CD8-positive, alpha-beta memory T cell (primary cell): ENCODE measurements at regions of chr3 and their contacts with region 1.

Region 1: DNA sequence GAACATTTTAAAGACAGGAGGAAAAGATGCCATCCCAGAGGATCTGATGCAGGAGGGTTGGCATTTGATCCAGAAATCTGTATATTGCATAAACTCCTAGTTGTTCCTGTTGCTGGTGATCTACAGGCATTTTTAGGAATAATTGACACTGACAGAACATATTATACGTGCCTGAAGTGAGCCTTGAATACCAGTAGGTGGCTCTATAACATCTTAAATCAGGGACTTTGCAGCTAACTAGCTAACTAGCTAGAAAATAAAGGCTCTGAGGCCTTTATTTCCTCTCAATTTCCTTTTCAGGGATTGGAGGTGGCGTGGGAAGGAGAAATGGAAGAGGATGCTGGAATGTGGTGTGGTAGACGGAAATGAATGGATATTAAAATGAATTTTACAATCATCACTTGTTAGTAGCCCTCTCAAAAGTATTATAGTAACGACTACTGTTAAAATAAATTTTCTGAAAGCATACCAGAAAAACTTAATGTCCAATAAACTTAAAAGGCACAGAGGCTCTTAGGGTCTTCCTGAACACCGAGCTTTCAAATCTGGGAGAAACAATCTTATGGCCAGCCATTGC is 73.9 kb upstream of the ZBED2 start:
- DNase-seq: peak in 2 of 5 donors; percentile 53 to 59
- H3K4me3 ChIP-seq: no peak overlapping the region
- H3K4me3 Mint-ChIP-seq: peak overlapping the region in 4 of 7 donors; percentile 3 to 46 (median 13)
- H3K27ac ChIP-seq: no peak overlapping the region
- H3K27ac Mint-ChIP-seq: peak overlapping the region; percentile 46 to 91 (median 72)
- H3K4me1 ChIP-seq: peaks cover 62% of the 10 kb centered on the region
- H3K4me1 Mint-ChIP-seq: peaks cover 65 to 88% (median 82%) of the 10 kb centered on the region in 3 donors
- H3K27me3 ChIP-seq: no peaks in the 10 kb centered on the region
- H3K27me3 Mint-ChIP-seq: no peaks in the 10 kb centered on the region

Region 2: GRCh38 chr3:111627092-111627491 is 41.9 kb before region 1 on chr3:
- CTCF ChIA-PET with region 1: no interaction called
- POLR2A ChIA-PET with region 1: no interaction called
- DNase-seq: no peak
- H3K4me3 ChIP-seq: no peak overlapping the region
- H3K4me3 Mint-ChIP-seq: no peak overlapping the region
- H3K27ac ChIP-seq: no peak overlapping the region
- H3K27ac Mint-ChIP-seq: no peak overlapping the region
- H3K4me1 ChIP-seq: no peaks in the 10 kb centered on the region
- H3K4me1 Mint-ChIP-seq: peaks cover 12 to 26% (median 16%) of the 10 kb centered on the region in 3 donors
- H3K27me3 ChIP-seq: no peaks in the 10 kb centered on the region
- H3K27me3 Mint-ChIP-seq: peaks cover 0 to 1% of the 10 kb centered on the region in 2 donors

Region 3: DNA sequence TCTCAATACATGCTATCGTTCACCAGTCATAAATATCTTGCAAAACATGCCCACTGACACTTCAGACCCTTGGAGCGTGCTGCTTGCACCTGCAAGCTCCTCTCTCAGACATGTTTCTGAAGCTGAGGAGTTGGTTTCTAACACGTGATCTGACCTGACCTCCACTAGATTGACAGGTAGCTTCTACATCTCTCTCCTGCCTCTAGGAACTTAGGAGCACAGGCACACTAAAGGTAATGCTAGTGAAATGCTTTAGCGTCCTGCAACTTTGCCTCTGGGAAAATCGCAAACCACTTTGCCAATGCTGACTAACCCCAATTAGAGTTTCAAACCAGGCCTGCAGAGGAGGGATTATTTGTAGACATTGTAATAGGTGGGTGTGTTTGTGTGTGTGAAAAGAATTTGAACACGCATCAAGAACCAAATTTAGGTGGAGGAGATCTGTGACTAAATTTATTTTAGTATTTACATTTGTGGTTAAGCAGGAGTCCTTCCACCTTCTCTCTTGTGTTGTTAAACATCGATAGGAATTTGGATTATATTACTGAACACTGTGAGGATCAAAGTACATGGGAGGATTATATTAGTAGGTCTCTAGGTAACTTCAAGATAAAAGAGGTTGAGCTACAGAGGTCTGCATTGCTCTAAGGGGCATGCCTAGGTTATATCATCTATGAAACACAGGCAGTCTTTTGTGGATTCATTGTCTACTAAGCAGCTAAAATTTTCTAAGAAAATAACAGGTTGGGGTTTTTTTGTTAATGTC is 12.8 kb after region 1 on chr3:
- CTCF ChIA-PET with region 1: interaction called, 10 read pairs
- POLR2A ChIA-PET with region 1: interaction called, 3 read pairs
- DNase-seq: no peak
- H3K4me3 ChIP-seq: no peak overlapping the region
- H3K4me3 Mint-ChIP-seq: peak overlapping the region in 1 of 7 donors; percentile 46
- H3K27ac ChIP-seq: no peak overlapping the region
- H3K27ac Mint-ChIP-seq: peak overlapping the region in 4 of 8 donors; percentile 12 to 24 (median 23)
- H3K4me1 ChIP-seq: peaks cover 13% of the 10 kb centered on the region
- H3K4me1 Mint-ChIP-seq: peaks cover 63 to 93% (median 87%) of the 10 kb centered on the region in 3 donors
- H3K27me3 ChIP-seq: no peaks in the 10 kb centered on the region
- H3K27me3 Mint-ChIP-seq: no peaks in the 10 kb centered on the region

Region 4: DNA sequence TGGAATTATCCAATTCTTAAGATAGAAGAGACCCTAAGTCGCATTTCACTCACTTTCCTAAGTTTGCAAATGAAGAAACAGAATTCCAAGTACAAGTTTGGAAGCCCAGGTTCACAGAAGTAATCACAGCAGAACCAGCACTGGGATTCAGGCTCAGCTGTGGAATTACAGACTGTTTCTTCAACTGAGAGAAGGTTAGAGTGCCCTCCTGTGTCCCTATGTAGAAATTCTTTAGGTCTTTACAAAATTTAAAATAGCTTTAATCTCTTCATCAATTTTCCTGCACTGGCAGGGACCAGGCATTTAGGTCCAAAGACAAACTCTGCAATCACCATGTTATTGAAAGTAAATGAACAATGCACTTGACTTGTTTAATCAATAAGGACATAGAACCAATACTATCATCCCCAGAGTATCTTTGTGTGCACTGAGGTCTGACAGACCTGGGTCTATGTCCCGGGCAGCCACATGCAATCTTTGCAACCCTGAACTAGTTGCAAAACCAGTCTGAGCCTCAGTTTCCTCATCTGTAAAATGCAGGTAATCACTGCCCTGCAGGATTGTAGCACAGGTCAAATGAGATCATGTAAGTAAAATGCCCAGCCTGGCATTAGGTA is 22.4 kb after region 1 on chr3:
- CTCF ChIA-PET with region 1: interaction called, 66 read pairs
- POLR2A ChIA-PET with region 1: interaction called, 6 read pairs
- DNase-seq: peak in 1 of 5 donors; percentile 36
- H3K4me3 ChIP-seq: no peak overlapping the region
- H3K4me3 Mint-ChIP-seq: no peak overlapping the region
- H3K27ac ChIP-seq: no peak overlapping the region
- H3K27ac Mint-ChIP-seq: peak overlapping the region in 3 of 8 donors; percentile 14 to 35 (median 31)
- H3K4me1 ChIP-seq: peaks cover 15% of the 10 kb centered on the region
- H3K4me1 Mint-ChIP-seq: peaks cover 60 to 86% (median 82%) of the 10 kb centered on the region in 3 donors
- H3K27me3 ChIP-seq: no peaks in the 10 kb centered on the region
- H3K27me3 Mint-ChIP-seq: no peaks in the 10 kb centered on the region